ENCODE measurements at regions of chr2 and their contacts with region 1.

Region 1: GRCh38 chr2:190382851-190383250 is 25.3 kb upstream of the MFSD6 start:
- DNase-seq: peak; percentile 43
- ATAC-seq: peak; percentile 98
- H3K4me3 ChIP-seq: no peak overlapping the region
- H3K27ac ChIP-seq: no peak overlapping the region
- H3K4me1 ChIP-seq: no peaks in the 10 kb centered on the region
- H3K27me3 ChIP-seq: no peaks in the 10 kb centered on the region
- CTCF ChIP-seq: peak; percentile 70 to 73 (median 72)
- EP300 ChIP-seq: no peak
- POLR2A ChIP-seq: no peak
- RAD21 ChIP-seq: peak; percentile 98

Region 2: DNA sequence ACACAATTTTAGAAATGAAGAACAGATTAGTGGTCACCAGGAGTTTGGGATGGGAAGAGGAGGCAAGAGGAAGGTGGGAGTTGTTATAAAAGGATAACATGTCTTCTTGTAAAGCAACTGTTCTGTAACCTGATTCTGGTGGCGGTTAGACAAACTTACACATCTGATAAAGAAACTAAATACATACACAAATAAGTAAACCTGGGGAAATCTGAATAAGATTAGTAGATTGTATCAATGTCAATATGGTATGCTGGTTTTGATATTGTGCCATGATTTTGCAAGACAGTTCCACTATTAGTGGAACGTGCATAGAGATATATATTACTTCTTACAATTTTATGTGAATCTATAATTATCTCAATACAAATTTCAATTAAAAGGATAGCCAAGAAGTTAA is 416.4 kb before region 1 on chr2:
- CTCF ChIA-PET with region 1: no interaction called
- POLR2A ChIA-PET with region 1: no interaction called
- RAD21 ChIA-PET with region 1: no interaction called
- SMC1A ChIA-PET with region 1: no interaction called
- in situ Hi-C with region 1: no loop called
- intact Hi-C with region 1: no loop called
- DNase-seq: no peak
- ATAC-seq: no peak
- H3K4me3 ChIP-seq: no peak overlapping the region
- H3K27ac ChIP-seq: no peak overlapping the region
- H3K4me1 ChIP-seq: no peaks in the 10 kb centered on the region
- H3K27me3 ChIP-seq: no peaks in the 10 kb centered on the region
- CTCF ChIP-seq: no peak
- EP300 ChIP-seq: no peak
- POLR2A ChIP-seq: no peak
- RAD21 ChIP-seq: no peak

Region 3: GRCh38 chr2:190396271-190396670 is 13.4 kb after region 1 on chr2:
- CTCF ChIA-PET with region 1: interaction called, 11 read pairs
- POLR2A ChIA-PET with region 1: no interaction called
- RAD21 ChIA-PET with region 1: no interaction called
- SMC1A ChIA-PET with region 1: interaction called, 7 read pairs
- in situ Hi-C with region 1: no loop called
- intact Hi-C with region 1: no loop called
- DNase-seq: no peak
- ATAC-seq: no peak
- H3K4me3 ChIP-seq: no peak overlapping the region
- H3K27ac ChIP-seq: no peak overlapping the region
- H3K4me1 ChIP-seq: no peaks in the 10 kb centered on the region
- H3K27me3 ChIP-seq: no peaks in the 10 kb centered on the region
- CTCF ChIP-seq: no peak
- EP300 ChIP-seq: no peak
- POLR2A ChIP-seq: no peak
- RAD21 ChIP-seq: no peak

Region 4: GRCh38 chr2:190477661-190478454 is 95.0 kb after region 1 on chr2:
- CTCF ChIA-PET with region 1: no interaction called
- POLR2A ChIA-PET with region 1: no interaction called
- RAD21 ChIA-PET with region 1: no interaction called
- SMC1A ChIA-PET with region 1: interaction called, 11 read pairs
- in situ Hi-C with region 1: no loop called
- intact Hi-C with region 1: no loop called
- DNase-seq: no peak
- ATAC-seq: no peak
- H3K4me3 ChIP-seq: no peak overlapping the region
- H3K27ac ChIP-seq: no peak overlapping the region
- H3K4me1 ChIP-seq: no peaks in the 10 kb centered on the region
- H3K27me3 ChIP-seq: no peaks in the 10 kb centered on the region
- CTCF ChIP-seq: no peak
- EP300 ChIP-seq: no peak
- POLR2A ChIP-seq: no peak
- RAD21 ChIP-seq: no peak

Region 5: GRCh38 chr2:190511104-190511503 is 128.3 kb after region 1 on chr2:
- CTCF ChIA-PET with region 1: interaction called, 13 read pairs
- POLR2A ChIA-PET with region 1: no interaction called
- RAD21 ChIA-PET with region 1: interaction called, 4 read pairs
- SMC1A ChIA-PET with region 1: interaction called, 6 read pairs
- in situ Hi-C with region 1: loop called (anchors 5 kb)
- intact Hi-C with region 1: loop called (anchors 1 kb)
- DNase-seq: no peak
- ATAC-seq: peak; percentile 31; the same call in 1 of the 3 replicates
- H3K4me3 ChIP-seq: no peak overlapping the region
- H3K27ac ChIP-seq: no peak overlapping the region
- H3K4me1 ChIP-seq: peaks cover 4% of the 10 kb centered on the region
- H3K27me3 ChIP-seq: no peaks in the 10 kb centered on the region
- CTCF ChIP-seq: peak; percentile 21 to 49 (median 27); a peak in 4 of 6 replicates
- EP300 ChIP-seq: no peak
- POLR2A ChIP-seq: no peak
- RAD21 ChIP-seq: peak; percentile 76

Region 6: DNA sequence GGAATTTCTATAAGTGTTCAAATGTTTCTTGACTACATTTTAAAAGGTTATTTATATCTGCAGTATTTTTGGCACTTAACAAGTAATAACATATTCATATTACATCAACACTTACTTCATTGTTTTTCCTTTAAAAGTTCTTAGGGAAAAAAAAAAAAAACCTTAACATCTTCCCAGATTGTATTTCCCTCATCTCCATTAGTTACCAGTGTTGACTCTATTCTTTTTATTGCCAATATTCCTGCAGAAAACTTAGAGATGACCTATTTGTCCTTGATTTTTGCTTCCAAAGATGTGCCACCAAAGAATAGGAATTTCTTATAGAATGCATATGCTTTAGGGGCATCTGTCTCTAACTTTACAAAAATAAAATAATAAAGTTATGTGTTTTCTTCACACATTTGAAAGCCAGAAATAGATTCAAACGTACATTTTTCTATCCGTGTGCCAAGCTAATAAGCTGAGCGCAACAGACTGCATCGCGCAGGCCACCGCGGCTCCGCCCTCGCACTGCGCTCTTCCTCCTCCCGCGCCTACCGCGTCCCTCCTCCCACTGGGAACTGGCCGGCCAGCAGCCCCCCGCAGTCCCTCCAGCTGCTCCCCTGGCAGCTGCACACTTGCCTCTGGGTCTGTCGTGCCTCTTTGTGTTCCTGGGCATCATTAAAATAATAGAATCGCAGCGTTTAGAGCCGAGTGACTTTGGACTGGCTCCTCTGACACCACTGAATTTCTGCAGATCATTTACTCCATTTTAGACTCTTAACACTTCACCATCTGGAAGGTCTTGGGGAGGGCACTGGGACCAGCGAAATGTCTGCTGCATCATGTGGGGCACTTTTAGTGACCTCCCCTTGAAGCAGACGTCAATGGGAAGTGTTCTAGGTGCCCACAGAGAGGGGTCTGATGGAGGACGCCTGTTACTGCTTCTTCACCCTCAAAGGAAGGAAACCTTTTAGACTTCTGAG is 244.9 kb after region 1 on chr2:
- CTCF ChIA-PET with region 1: no interaction called
- POLR2A ChIA-PET with region 1: no interaction called
- RAD21 ChIA-PET with region 1: no interaction called
- SMC1A ChIA-PET with region 1: no interaction called
- in situ Hi-C with region 1: no loop called
- intact Hi-C with region 1: loop called (anchors 5 kb)
- DNase-seq: no peak
- ATAC-seq: peak; percentile 90
- H3K4me3 ChIP-seq: peak overlapping the region; percentile 41
- H3K27ac ChIP-seq: no peak overlapping the region
- H3K4me1 ChIP-seq: no peaks in the 10 kb centered on the region
- H3K27me3 ChIP-seq: no peaks in the 10 kb centered on the region
- CTCF ChIP-seq: no peak
- EP300 ChIP-seq: no peak
- POLR2A ChIP-seq: no peak
- RAD21 ChIP-seq: no peak

Region 7: DNA sequence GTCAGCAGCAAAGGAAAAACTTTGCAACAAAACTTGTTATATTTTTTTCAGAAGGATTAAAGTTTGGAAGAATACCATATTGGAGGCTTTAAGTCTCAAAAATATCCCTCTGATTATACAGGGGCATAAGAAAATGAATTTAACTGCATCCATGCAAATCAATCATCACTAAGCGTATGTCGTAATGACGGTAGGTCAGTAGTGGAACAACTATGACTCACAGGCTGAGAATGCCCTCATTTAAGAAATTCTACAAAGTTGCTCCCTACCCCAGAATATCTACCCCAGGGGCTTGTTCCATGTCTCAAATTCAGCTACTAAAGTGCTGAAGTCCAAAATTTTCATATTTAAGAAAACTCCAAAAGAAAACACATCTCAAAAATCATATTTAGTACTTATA is 253.5 kb after region 1 on chr2:
- CTCF ChIA-PET with region 1: interaction called, 4 read pairs
- POLR2A ChIA-PET with region 1: no interaction called
- RAD21 ChIA-PET with region 1: no interaction called
- SMC1A ChIA-PET with region 1: interaction called, 11 read pairs
- in situ Hi-C with region 1: no loop called
- intact Hi-C with region 1: no loop called
- DNase-seq: no peak
- ATAC-seq: 0 out of 3 replicates have a peak, but pooled peaks have one; percentile 12
- H3K4me3 ChIP-seq: no peak overlapping the region
- H3K27ac ChIP-seq: no peak overlapping the region
- H3K4me1 ChIP-seq: 0 out of 2 replicates have a peak, but pooled peaks cover 3% of the 10 kb centered on the region
- H3K27me3 ChIP-seq: no peaks in the 10 kb centered on the region
- CTCF ChIP-seq: no peak
- EP300 ChIP-seq: no peak
- POLR2A ChIP-seq: no peak
- RAD21 ChIP-seq: no peak

Region 8: DNA sequence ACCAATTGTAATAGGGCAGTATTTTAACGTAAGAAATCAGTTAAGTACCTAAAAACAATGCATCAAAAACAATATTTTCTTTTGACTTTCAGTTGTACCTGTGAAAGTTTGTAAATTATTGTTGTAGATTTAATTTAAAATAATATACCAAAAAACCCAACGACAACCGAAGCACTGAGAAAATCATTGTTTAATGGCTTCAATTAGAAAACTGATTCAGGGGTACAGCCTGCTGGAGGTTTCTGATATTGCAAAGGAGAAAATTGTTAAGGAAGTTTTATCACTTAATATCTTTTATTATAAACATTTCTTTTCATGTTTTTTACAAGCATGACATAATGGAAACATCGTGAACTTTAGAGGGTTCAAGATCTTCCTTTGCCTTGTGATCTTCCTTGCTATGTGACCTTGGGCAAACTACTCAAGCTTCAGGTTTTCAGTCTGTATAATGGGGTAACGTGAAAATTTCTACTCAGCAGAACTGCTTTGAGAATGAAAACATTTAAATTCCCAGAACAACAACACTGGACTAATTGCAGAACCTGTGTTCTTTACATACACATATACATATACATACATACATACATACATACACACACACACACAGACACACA is 421.4 kb after region 1 on chr2:
- CTCF ChIA-PET with region 1: interaction called, 17 read pairs
- POLR2A ChIA-PET with region 1: no interaction called
- RAD21 ChIA-PET with region 1: interaction called, 4 read pairs
- SMC1A ChIA-PET with region 1: interaction called, 9 read pairs
- in situ Hi-C with region 1: loop called (anchors 5 kb)
- intact Hi-C with region 1: loop called (anchors 1 kb)
- DNase-seq: no peak
- ATAC-seq: no peak
- H3K4me3 ChIP-seq: no peak overlapping the region
- H3K27ac ChIP-seq: no peak overlapping the region
- H3K4me1 ChIP-seq: peaks cover 5% of the 10 kb centered on the region; the same call in 1 of the 2 replicates
- H3K27me3 ChIP-seq: no peaks in the 10 kb centered on the region
- CTCF ChIP-seq: peak; percentile 34 to 63 (median 48); a peak in 5 of 6 replicates
- EP300 ChIP-seq: no peak
- POLR2A ChIP-seq: no peak
- RAD21 ChIP-seq: peak; percentile 89

Measured in GM12878 (cell line).